HCT116 (cell line): ENCODE measurements at regions of chr14 and their contacts with region 1.

Region 1: DNA sequence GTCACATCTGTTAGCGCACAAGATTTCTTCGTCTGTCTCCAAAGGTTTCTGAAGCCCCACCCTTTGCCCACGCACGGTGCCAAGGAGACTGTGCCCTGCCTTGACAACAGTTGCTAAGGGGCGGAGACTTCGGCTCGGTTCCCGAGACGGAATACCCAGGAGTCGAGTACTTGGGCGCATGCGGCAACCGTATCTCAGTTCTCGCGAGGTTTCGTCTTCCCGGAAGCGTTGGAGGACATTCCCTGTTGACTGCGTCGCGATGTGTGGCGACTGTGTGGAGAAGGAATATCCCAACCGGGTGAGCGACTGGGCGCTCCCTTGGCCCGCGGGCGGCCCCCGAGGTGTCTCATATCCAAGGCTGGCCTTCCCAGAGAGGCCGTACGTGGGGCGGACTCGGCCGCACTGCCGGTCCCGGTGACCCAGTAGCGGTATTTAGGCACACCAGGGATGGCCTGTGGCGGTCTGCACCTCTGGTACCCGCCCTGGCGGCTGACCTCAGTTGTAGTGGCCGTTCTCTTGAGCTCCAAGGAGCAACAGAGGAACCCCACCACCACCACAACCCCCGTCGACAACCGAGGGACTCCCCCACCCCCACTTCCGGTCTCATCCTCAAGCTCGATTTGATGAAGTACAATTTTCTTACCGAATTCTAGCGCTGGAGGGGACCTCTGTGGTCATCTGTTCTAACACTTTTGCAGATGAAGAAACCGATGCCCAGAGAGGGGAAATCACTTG is at the start of gene CHURC1:
- DNase-seq: peak; percentile 98
- ATAC-seq: peak; percentile 98
- H3K4me3 ChIP-seq: peak within 1 kb of the TSS; percentile 81 to 97
- H3K27ac ChIP-seq: peak within 1 kb of the TSS; percentile 79
- H3K4me1 ChIP-seq: peaks cover 8 to 16% of the 10 kb centered on the region in 2 experiments; a peak in 3 of 4 replicates
- H3K27me3 ChIP-seq: no peaks in the 10 kb centered on the region
- CTCF ChIP-seq: no peak
- POLR2A ChIP-seq: peak; percentile 71
- RAD21 ChIP-seq: no peak
- total RNA-seq, gene CHURC1: 47.5 TPM

Region 2: DNA sequence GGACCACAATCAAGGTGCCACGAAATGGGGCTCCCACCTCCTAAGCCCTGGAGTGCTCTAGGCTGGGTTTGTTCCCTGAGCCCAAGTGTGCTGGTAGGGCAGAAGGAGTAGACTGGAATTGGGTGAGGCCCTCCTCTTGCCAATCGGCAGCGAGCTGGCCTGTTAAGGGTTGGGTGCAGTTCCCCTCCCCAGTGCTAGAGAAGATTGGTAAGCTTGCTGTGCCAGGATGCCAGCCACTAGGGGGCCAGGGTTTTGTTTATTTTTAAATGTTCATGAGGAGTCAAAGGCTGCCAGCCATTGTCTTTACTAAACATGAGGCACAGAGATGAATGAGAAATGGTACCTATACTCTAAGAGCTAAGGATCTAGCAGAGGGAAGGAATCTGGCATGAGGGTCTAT is 114.4 kb before region 1 on chr14:
- CTCF ChIA-PET with region 1: interaction called, 8 read pairs
- POLR2A ChIA-PET with region 1: no interaction called
- RAD21 ChIA-PET with region 1: no interaction called
- intact Hi-C with region 1: loop called (anchors 5 kb)
- DNase-seq: peak; percentile 36
- ATAC-seq: peak; percentile 90
- H3K4me3 ChIP-seq: no peak overlapping the region
- H3K27ac ChIP-seq: no peak overlapping the region
- H3K4me1 ChIP-seq: peaks cover 6 to 10% of the 10 kb centered on the region in 2 experiments; a peak in 3 of 4 replicates
- H3K27me3 ChIP-seq: no peaks in the 10 kb centered on the region
- CTCF ChIP-seq: peak; percentile 49 to 88 (median 80); a peak in 5 of 6 replicates
- POLR2A ChIP-seq: no peak
- RAD21 ChIP-seq: peak; percentile 40

Region 3: GRCh38 chr14:64952598-64953309 is 38.4 kb after region 1 on chr14:
- CTCF ChIA-PET with region 1: no interaction called
- POLR2A ChIA-PET with region 1: no interaction called
- RAD21 ChIA-PET with region 1: no interaction called
- intact Hi-C with region 1: no loop called
- DNase-seq: no peak
- ATAC-seq: peak; percentile 76
- H3K4me3 ChIP-seq: no peak overlapping the region
- H3K27ac ChIP-seq: no peak overlapping the region
- H3K4me1 ChIP-seq: no peaks in the 10 kb centered on the region
- H3K27me3 ChIP-seq: no peaks in the 10 kb centered on the region
- CTCF ChIP-seq: peak in 2 of 3 experiments; percentile 12 to 17; a peak in 2 of 6 replicates
- POLR2A ChIP-seq: no peak
- RAD21 ChIP-seq: no peak